ENCODE measurements at regions of chr9 and their contacts with region 1.

Region 1: GRCh38 chr9:116156621-116157314 is 3.2 kb downstream of the PAPPA start:
- DNase-seq: peak; percentile 57 to 74 (median 72)
- H3K4me3 ChIP-seq: peak overlapping the region; percentile 31
- H3K27ac ChIP-seq: peak overlapping the region; percentile 71 to 90
- H3K4me1 ChIP-seq: peaks cover 9% of the 10 kb centered on the region
- H3K27me3 ChIP-seq: no peaks in the 10 kb centered on the region
- CTCF ChIP-seq: no peak
- EP300 ChIP-seq: no peak
- POLR2A ChIP-seq: no peak

Region 2: DNA sequence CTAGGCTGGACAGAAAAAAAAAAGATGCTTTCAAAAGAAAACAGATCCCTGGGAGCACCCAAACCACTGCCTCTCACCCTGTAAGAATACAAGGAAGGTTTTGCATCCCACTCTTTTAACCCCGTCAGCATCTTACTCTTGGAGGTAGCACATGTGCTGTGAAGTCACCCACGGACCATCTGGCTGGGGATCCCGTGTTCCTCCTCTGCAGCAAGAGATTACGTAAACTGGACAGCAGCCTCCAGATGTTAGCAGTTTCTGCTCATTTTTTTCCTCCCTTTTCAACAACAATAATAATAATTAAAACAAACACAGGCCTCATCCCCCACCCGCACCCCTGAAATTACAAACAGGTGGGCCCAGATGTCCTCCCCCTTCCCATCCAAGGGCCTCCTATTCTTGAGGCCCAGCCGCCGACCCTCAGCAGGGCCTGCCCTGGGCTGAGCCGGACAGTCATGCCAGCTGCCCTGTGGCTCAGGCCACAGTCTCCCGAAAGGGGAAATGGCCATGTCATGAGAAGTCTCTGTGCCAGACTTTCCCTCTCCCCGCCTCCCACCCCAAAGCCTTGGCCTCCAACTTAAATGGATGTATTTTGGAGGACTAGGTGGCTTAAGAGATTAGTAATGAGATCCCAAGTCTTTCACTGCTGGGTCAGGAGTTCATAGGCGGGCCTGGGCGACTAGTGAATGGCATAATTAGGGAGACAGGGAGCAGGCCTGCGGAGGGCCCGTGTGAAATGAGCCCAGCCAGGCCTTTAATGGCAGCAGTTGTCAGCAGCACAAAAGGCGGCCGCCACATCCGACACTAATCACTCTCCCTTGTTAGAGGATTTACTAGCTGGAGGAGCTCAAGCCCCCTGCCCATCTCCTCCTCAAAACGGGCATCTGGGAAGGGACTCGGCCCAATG is 162.0 kb after region 1 on chr9:
- intact Hi-C with region 1: loop called in 1 of 4 experiments (anchors 5 kb)
- DNase-seq: peak; percentile 56 to 78 (median 71)
- H3K4me3 ChIP-seq: no peak overlapping the region
- H3K27ac ChIP-seq: peak overlapping the region; percentile 16 to 41
- H3K4me1 ChIP-seq: peaks cover 4% of the 10 kb centered on the region
- H3K27me3 ChIP-seq: no peaks in the 10 kb centered on the region
- CTCF ChIP-seq: no peak
- EP300 ChIP-seq: no peak
- POLR2A ChIP-seq: no peak

Region 3: GRCh38 chr9:116450378-116451139 is 293.8 kb after region 1 on chr9:
- intact Hi-C with region 1: no loop called
- DNase-seq: no peak
- H3K4me3 ChIP-seq: no peak overlapping the region
- H3K27ac ChIP-seq: no peak overlapping the region
- H3K4me1 ChIP-seq: no peaks in the 10 kb centered on the region
- H3K27me3 ChIP-seq: no peaks in the 10 kb centered on the region
- CTCF ChIP-seq: no peak
- EP300 ChIP-seq: no peak
- POLR2A ChIP-seq: no peak